ENCODE measurements at regions of chr12 and their contacts with region 1.

Region 1: DNA sequence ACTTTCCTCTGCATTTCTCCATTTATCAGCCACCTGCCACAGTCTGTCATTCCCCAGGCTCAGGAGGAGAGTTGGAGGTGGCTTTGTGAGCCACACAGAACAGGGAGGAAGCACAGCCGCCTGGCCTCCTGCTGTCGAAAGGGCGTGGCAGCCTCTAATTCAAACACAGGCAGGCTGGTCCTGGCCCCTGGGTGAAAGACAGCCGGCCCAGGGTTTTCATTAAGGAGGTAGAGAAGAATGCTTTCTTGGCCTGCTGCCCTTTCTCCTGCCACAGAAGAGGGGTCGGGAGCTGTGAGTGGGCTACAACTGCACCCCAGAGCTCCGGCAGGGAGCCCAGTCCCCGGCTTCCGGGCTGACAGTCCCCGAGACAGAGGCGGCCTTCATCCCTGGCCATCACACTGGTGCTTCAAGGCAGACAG is 108.6 kb upstream of the FZD10 start:
- DNase-seq: peak in 1 of 3 donors; percentile 12
- ATAC-seq: peak; percentile 45
- H3K4me3 ChIP-seq: no peak overlapping the region
- H3K4me1 ChIP-seq: no peaks in the 10 kb centered on the region
- CTCF ChIP-seq: no peak

Region 2: GRCh38 chr12:129605666-129606065 is 448.0 kb before region 1 on chr12:
- intact Hi-C with region 1: no loop called
- DNase-seq: no peak
- ATAC-seq: no peak
- H3K4me3 ChIP-seq: no peak overlapping the region
- H3K4me1 ChIP-seq: no peaks in the 10 kb centered on the region
- CTCF ChIP-seq: no peak

Region 3: DNA sequence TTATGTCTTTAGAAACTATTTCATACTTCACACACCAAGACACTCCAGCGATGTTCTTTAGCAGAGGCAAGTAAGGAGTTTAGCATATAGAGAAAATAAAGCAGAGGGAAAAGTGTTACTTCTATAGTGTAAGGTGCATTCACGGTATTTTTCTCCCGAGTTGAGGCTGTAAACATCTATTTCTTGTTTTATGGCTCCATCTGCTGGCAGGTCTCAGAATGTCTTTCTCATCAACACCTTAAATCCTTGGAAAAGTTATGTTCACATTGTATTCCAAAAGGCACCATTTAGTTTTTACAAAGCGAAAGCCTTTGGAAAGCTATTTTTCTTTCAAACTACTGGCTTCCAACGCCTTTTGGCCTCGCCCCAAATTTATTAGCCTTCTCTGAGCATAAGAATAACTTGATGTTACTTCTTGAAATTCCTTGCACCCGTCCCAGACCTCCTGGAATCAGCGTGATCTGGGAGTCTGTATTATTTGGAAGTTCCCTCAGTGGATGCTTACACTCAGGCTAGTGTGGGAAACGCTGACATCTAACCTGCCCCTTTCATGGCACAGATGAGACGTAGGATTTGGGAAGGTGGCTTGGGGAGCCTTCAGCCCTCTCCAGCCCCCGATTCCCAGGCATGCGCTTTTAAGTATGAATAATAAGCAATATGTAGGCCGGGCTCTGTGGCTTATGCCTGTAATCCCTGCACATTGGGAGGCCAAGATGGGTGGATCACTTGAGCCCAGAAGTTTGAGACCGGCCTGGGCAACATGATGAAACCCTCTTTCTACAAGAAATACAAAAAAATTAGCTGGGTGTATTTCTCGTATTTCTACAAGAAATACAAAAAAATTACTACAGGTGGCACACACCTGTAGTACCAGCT is 282.1 kb after region 1 on chr12:
- intact Hi-C with region 1: loop called (anchors 5 kb)
- DNase-seq: peak in 1 of 3 donors; percentile 83
- ATAC-seq: peak; percentile 42
- H3K4me3 ChIP-seq: no peak overlapping the region
- H3K4me1 ChIP-seq: peaks cover 3% of the 10 kb centered on the region
- CTCF ChIP-seq: peak; percentile 22